ENCODE measurements at regions of chr5 and their contacts with region 1.

Region 1: GRCh38 chr5:746258-746761 is 38.2 kb downstream of the ZDHHC11B start:
- ATAC-seq: no peak
- H3K4me3 ChIP-seq: no peak overlapping the region
- H3K27ac ChIP-seq: no peak overlapping the region
- H3K4me1 ChIP-seq: no peaks in the 10 kb centered on the region

Region 2: GRCh38 chr5:191036-191948 is 555.0 kb before region 1 on chr5 and contains the start of gene LRRC14B:
- in situ Hi-C with region 1: no loop called
- ATAC-seq: peak in 7 of 8 experiments; percentile 5 to 77 (median 61)
- H3K4me3 ChIP-seq: no peak within 1 kb of the TSS
- H3K27ac ChIP-seq: no peak within 1 kb of the TSS
- H3K4me1 ChIP-seq: peaks cover 16 to 36% of the 10 kb centered on the region in 2 donors
- total RNA-seq, gene LRRC14B: 0.18 to 4.5 (median 0.25) TPM in 5 of 8 experiments, not detected in the others

Region 3: GRCh38 chr5:611721-612486 is 134.4 kb before region 1 on chr5 and contains the start of gene CEP72:
- in situ Hi-C with region 1: no loop called
- ATAC-seq: peak; percentile 83 to 90 (median 87)
- H3K4me3 ChIP-seq: peak within 1 kb of the TSS; percentile 67 to 99 (median 80)
- H3K27ac ChIP-seq: peak within 1 kb of the TSS in 1 of 2 donors; percentile 36
- H3K4me1 ChIP-seq: peaks cover 4 to 6% of the 10 kb centered on the region in 2 donors
- total RNA-seq, gene CEP72: 0.71 to 18.0 (median 2.1) TPM

Region 4: DNA sequence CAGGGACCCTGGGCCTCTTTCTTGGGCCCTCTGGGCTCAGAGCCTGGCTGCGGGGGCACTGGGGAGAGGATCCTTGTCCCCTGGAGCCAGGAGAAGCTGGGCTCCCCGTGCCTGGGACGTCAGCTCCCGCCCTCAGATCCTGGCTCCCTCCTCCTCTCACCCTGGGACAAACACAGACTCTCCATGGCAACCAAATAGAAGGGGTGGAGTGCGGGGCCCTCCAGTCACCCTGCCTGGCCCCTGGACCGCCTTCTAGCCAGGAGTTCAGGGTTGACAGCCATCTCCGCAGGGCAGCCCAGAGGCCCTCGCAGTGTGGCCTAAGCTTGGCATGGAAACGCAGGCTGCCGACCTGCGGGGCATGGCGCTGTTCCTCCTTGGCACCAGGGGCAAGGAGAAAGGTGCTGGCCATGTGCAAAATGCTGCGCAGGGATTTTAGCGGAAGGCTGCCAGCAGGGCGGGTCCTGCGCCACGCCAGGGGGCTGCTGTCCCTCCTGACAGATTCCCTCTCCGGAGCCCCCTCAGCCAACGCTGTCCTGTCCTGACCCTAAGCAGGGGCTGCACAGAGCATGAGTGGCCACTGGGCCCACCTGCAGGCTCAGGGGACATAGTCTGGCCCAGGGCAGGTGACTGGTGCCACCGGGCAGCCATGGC is 103.5 kb after region 1 on chr5:
- in situ Hi-C with region 1: loop called in 1 of 9 experiments (anchors 25 kb)
- ATAC-seq: peak; percentile 50 to 79 (median 72)
- H3K4me3 ChIP-seq: peak overlapping the region in 2 of 5 donors; percentile 7 to 27
- H3K27ac ChIP-seq: no peak overlapping the region
- H3K4me1 ChIP-seq: peaks cover 19 to 26% of the 10 kb centered on the region in 2 donors

Measured in motor neuron (in vitro differentiated cells).